Activated T-helper 2 cell treated with anti-CD3 and anti-CD28 coated beads, Interferon-gamma antibody, Interleukin-2, Interleukin-4, amounts not matched to agents 10 μg/mL and 5 μg/mL and 100 μg/mL, durations not matched to agents 14 hours and 24 hours and 36 hours (primary cell): ENCODE measurements at regions of chr3 and their contacts with region 1.

Region 1: DNA sequence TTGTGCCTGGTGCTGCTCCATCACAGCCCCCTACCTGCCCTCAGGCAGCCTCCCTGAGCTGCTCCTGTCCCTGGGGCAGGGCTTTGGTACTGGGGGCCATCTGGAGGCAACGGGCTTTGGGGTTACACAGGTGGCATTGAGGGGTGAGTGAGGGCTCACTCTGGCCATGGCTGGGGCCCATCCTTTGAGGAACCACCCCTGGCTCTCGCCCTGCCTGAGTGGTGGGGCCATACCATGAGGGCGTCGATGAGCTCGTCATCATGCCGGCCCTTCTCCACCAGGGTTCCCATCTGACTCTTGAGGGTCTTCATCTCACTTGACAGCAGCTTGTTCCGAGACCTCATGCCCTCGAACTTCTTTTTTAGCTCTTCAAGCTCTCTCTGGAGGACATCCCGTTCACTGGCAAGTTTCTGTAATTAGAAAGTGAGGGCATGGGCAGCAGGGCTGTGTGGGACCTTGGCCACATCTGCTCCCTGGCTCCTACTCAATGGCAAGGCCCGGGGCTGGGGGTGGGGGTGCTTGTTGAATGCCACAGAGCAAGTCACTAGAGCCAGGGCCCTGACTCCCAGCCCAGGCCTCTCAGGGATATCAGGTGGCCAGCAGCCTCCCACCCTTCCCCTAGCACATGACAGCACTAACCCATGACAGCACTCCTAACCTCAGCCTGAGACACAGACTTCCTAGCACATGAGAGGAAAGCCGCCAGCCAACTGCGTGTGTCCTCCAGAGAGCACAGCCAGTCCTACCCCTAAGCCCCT is 33.5 kb downstream of the CCDC13 start:
- DNase-seq: no peak
- H3K4me3 Mint-ChIP-seq: no peak overlapping the region
- H3K27ac Mint-ChIP-seq: no peak overlapping the region
- H3K4me1 Mint-ChIP-seq: peaks cover 4% of the 10 kb centered on the region
- H3K27me3 Mint-ChIP-seq: no peaks in the 10 kb centered on the region

Region 2: GRCh38 chr3:42562047-42562907 is 177.3 kb before region 1 on chr3:
- intact Hi-C with region 1: loop called (anchors 5 kb)
- DNase-seq: no peak
- H3K4me3 Mint-ChIP-seq: no peak overlapping the region
- H3K27ac Mint-ChIP-seq: peak overlapping the region; percentile 68
- H3K4me1 Mint-ChIP-seq: peaks cover 15% of the 10 kb centered on the region
- H3K27me3 Mint-ChIP-seq: no peaks in the 10 kb centered on the region

Region 3: DNA sequence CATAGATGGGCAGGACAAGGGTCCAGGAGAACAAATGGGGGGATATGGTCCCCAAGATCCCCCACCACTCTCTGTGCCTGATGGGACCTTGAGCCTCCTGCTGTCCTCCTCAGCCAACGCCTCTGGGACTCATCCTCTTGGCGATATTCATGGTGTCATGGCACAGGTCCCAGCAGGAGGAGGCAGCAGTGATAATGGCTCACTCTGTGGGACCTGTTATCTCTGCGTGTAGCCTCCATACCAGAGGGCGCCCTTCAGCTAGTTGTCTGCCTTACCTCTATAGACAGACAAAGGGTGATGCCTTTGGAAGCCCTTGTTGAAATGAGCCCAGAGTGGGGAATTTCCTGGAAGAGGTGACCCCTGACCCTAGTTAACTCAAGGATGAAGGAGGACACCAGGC is 78.7 kb before region 1 on chr3:
- intact Hi-C with region 1: loop called (anchors 5 kb)
- DNase-seq: no peak
- H3K4me3 Mint-ChIP-seq: no peak overlapping the region
- H3K27ac Mint-ChIP-seq: no peak overlapping the region
- H3K4me1 Mint-ChIP-seq: no peaks in the 10 kb centered on the region
- H3K27me3 Mint-ChIP-seq: no peaks in the 10 kb centered on the region

Region 4: DNA sequence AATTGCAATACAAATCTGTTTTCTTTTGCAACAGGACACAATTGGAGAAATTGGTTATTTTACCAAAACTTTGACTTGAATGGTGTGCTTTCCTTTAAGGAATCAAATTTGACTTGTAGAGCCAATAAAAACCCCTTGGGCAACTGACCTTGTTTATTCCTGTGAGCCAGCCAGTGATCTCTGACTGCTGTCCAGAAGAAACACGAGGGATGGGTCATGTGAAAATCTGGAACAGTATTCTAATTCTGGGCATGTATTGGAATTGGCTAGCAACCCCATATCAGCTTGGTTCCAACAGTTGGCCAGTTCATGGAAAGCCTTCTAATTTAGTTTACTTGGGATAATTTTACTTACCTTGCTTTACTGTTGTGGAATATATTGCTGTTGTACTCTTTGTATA is 17.9 kb before region 1 on chr3:
- intact Hi-C with region 1: no loop called
- DNase-seq: no peak
- H3K4me3 Mint-ChIP-seq: no peak overlapping the region
- H3K27ac Mint-ChIP-seq: no peak overlapping the region
- H3K4me1 Mint-ChIP-seq: no peaks in the 10 kb centered on the region
- H3K27me3 Mint-ChIP-seq: peaks cover 9% of the 10 kb centered on the region